Activated CD8-positive, alpha-beta T cell treated with anti-CD3 and anti-CD28 coated beads, Interleukin-2, amount 10 ng/mL, durations not matched to agents 7 days and 5 days (primary cell): ENCODE measurements at regions of chr16 and their contacts with region 1.

Region 1: DNA sequence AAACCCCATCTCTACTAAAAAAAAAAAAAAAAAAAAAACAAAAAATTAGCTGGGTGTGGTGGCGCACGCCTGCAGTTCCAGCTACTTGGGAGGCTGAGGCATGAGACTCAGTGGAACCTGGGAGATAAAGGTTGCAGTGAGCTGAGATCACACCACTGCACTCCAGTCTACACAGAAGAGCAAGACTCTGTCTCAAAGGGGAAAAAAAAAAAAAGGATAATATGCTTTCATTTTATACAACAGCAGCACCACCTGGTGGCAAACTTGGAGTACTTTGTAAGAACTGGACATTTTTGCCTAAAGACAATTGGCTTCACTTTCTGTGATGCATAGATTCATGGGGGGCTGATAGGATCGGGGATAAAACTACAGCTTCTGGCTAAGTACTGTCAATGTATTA is 8.5 kb downstream of the CHTF8 start:
- DNase-seq: peak; percentile 80
- ATAC-seq: peak; percentile 63
- H3K4me3 Mint-ChIP-seq: no peak overlapping the region
- H3K27ac Mint-ChIP-seq: no peak overlapping the region
- H3K4me1 Mint-ChIP-seq: peaks cover 5% of the 10 kb centered on the region
- H3K27me3 Mint-ChIP-seq: no peaks in the 10 kb centered on the region

Region 2: GRCh38 chr16:68590201-68590994 is 533.5 kb before region 1 on chr16:
- CTCF ChIA-PET with region 1: interaction called, 13 read pairs
- POLR2A ChIA-PET with region 1: no interaction called
- DNase-seq: peak; percentile 69
- ATAC-seq: peak; percentile 86
- H3K4me3 Mint-ChIP-seq: no peak overlapping the region
- H3K27ac Mint-ChIP-seq: no peak overlapping the region
- H3K4me1 Mint-ChIP-seq: peaks cover 2% of the 10 kb centered on the region
- H3K27me3 Mint-ChIP-seq: no peaks in the 10 kb centered on the region

Region 3: GRCh38 chr16:68902008-68902968 is 221.6 kb before region 1 on chr16:
- CTCF ChIA-PET with region 1: interaction called, 20 read pairs
- POLR2A ChIA-PET with region 1: no interaction called
- DNase-seq: peak; percentile 40
- ATAC-seq: no peak
- H3K4me3 Mint-ChIP-seq: no peak overlapping the region
- H3K27ac Mint-ChIP-seq: no peak overlapping the region
- H3K4me1 Mint-ChIP-seq: no peaks in the 10 kb centered on the region
- H3K27me3 Mint-ChIP-seq: no peaks in the 10 kb centered on the region

Region 4: DNA sequence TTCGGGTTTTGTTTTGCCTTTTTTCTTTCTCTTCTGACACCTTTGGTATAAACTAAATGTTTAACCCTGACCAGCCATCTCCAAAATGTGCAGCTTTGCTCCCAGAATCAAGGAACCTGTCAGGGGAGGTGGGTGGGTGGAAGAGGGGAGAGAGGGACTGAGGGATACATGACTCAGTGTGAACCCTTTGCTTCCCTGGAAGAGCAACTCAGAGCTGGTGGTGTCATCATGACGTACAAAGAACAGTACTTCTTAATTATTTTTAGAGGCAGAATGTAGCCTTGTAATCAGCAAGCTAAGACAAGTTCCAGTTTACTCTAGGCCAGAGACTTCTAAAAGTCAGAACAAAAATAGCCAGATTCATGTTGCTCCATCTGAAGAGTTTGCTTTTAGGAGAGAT is 138.1 kb before region 1 on chr16:
- CTCF ChIA-PET with region 1: no interaction called
- POLR2A ChIA-PET with region 1: no interaction called
- DNase-seq: no peak
- ATAC-seq: no peak
- H3K4me3 Mint-ChIP-seq: no peak overlapping the region
- H3K27ac Mint-ChIP-seq: no peak overlapping the region
- H3K4me1 Mint-ChIP-seq: no peaks in the 10 kb centered on the region
- H3K27me3 Mint-ChIP-seq: no peaks in the 10 kb centered on the region

Region 5: DNA sequence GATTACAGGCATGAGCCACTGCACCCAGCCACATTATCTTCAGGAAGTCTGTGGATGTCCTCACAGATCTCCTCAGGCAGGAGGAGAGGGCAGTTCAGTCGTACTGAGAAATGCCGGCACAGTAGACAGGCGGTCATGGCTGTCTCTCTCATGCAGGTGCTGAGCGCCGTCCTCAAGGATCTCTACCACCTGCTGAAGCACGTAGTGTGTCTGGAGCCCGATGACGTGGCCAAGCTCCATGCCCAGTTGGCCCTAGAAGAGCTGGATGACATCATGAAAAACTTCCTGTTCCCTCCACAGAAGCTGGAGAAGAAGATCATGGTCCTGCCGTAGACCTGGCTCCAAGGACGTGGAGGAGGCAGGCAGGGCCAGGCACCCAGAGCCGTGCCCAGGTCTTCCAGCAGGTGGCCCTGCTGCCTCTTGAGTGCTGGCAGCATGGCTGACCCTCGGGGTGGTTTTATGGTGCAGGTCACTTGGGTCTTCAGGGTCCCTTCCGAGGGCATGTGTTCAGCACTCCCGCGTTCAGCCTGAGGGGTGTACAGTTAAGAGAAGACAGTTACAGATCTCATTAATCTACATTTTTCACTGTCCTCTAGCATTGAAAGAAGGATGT is 40.5 kb before region 1 on chr16:
- CTCF ChIA-PET with region 1: no interaction called
- POLR2A ChIA-PET with region 1: no interaction called
- DNase-seq: no peak
- ATAC-seq: peak; percentile 51
- H3K4me3 Mint-ChIP-seq: no peak overlapping the region
- H3K27ac Mint-ChIP-seq: no peak overlapping the region
- H3K4me1 Mint-ChIP-seq: peaks cover 7% of the 10 kb centered on the region
- H3K27me3 Mint-ChIP-seq: no peaks in the 10 kb centered on the region

Region 6: GRCh38 chr16:69112285-69113129 is 11.4 kb before region 1 on chr16:
- CTCF ChIA-PET with region 1: interaction called, 49 read pairs
- POLR2A ChIA-PET with region 1: no interaction called
- DNase-seq: peak; percentile 61
- ATAC-seq: peak; percentile 72
- H3K4me3 Mint-ChIP-seq: no peak overlapping the region
- H3K27ac Mint-ChIP-seq: no peak overlapping the region
- H3K4me1 Mint-ChIP-seq: peaks cover 8% of the 10 kb centered on the region
- H3K27me3 Mint-ChIP-seq: peaks cover 8% of the 10 kb centered on the region